ENCODE measurements at regions of chr1 and their contacts with region 1.

Region 1: GRCh38 chr1:18902523-18903290 is at the start of gene ALDH4A1:
- DNase-seq: peak; percentile 98
- H3K4me3 ChIP-seq: peak within 1 kb of the TSS; percentile 82 to 90 (median 83)
- H3K27ac ChIP-seq: peak within 1 kb of the TSS; percentile 88
- H3K4me1 ChIP-seq: peaks cover 22% of the 10 kb centered on the region
- H3K27me3 ChIP-seq: no peaks in the 10 kb centered on the region
- CTCF ChIP-seq: peak in 1 of 2 donors; percentile 0
- POLR2A ChIP-seq: peak; percentile 49
- total RNA-seq, gene ALDH4A1: 17.4 and 18.6 TPM in 2 replicates

Region 2: GRCh38 chr1:18918417-18918816 is 15.7 kb after region 1 on chr1:
- CTCF ChIA-PET with region 1: interaction called, 38 read pairs
- POLR2A ChIA-PET with region 1: no interaction called
- dilution Hi-C with region 1: no loop called
- intact Hi-C with region 1: no loop called
- DNase-seq: no peak
- H3K4me3 ChIP-seq: no peak overlapping the region
- H3K27ac ChIP-seq: no peak overlapping the region
- H3K4me1 ChIP-seq: peaks cover 21% of the 10 kb centered on the region
- H3K27me3 ChIP-seq: no peaks in the 10 kb centered on the region
- CTCF ChIP-seq: no peak
- POLR2A ChIP-seq: no peak

Region 3: GRCh38 chr1:18956369-18957135 is 53.8 kb after region 1 on chr1 and contains the start of gene IFFO2:
- CTCF ChIA-PET with region 1: interaction called, 50 read pairs
- POLR2A ChIA-PET with region 1: interaction called, 7 read pairs
- dilution Hi-C with region 1: no loop called
- intact Hi-C with region 1: loop called (anchors 1 kb)
- DNase-seq: peak; percentile 93
- H3K4me3 ChIP-seq: peak within 1 kb of the TSS; percentile 84 to 89 (median 86)
- H3K27ac ChIP-seq: peak within 1 kb of the TSS; percentile 82
- H3K4me1 ChIP-seq: peaks cover 25% of the 10 kb centered on the region
- H3K27me3 ChIP-seq: peaks cover 4 to 9% of the 10 kb centered on the region in 2 experiments
- CTCF ChIP-seq: no peak
- POLR2A ChIP-seq: peak; percentile 88
- total RNA-seq, gene IFFO2: 31.1 and 35.1 TPM in 2 replicates

Region 4: DNA sequence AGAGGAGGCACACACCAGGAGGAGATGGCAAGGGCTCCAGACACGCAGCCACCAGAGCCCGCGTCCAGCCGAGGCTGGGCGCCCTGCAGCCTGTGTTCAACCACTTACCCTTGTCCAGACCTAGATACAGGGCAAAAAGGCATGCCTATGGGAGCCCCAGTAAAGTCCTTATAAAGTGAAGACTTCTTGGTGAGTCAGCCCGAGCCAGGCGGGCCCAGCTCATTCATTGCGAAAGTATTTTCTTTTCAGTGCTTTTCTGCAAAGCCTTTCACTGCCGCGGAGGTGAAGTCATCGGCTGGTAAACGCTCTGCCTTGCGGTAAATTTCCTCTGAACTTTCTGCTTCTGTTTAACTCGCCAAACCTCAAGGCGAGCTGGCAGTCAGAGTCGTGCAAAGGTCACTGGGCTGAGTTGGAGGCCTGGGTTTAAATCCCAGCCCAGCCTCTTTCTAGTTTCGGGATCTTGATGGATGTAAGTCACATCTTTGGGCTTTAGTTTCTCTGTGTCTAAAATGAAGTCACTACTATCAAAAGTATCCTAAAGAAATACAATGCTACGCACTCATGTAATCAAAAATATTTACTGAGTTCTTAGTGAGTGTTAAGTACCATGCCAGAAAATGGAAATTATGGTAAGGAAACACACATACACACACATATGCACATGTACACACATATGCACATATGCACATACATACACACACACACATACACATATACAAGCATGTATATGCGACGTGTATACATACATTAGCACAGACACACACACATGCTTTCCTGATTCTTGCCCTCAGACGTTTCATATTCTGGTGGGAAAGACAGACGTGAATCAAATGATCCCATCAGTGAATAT is 108.5 kb after region 1 on chr1:
- CTCF ChIA-PET with region 1: interaction called, 14 read pairs
- POLR2A ChIA-PET with region 1: no interaction called
- dilution Hi-C with region 1: no loop called
- intact Hi-C with region 1: no loop called
- DNase-seq: peak; percentile 89
- H3K4me3 ChIP-seq: no peak overlapping the region
- H3K27ac ChIP-seq: peak overlapping the region; percentile 84
- H3K4me1 ChIP-seq: peaks cover 31% of the 10 kb centered on the region
- H3K27me3 ChIP-seq: no peaks in the 10 kb centered on the region
- CTCF ChIP-seq: no peak
- POLR2A ChIP-seq: no peak

Region 5: GRCh38 chr1:19087737-19088594 is 185.3 kb after region 1 on chr1:
- CTCF ChIA-PET with region 1: interaction called, 38 read pairs
- POLR2A ChIA-PET with region 1: interaction called, 4 read pairs
- dilution Hi-C with region 1: no loop called
- intact Hi-C with region 1: loop called (anchors 1 kb)
- DNase-seq: no peak
- H3K4me3 ChIP-seq: no peak overlapping the region
- H3K27ac ChIP-seq: no peak overlapping the region
- H3K4me1 ChIP-seq: peaks cover 15% of the 10 kb centered on the region
- H3K27me3 ChIP-seq: no peaks in the 10 kb centered on the region
- CTCF ChIP-seq: no peak
- POLR2A ChIP-seq: no peak

Region 6: DNA sequence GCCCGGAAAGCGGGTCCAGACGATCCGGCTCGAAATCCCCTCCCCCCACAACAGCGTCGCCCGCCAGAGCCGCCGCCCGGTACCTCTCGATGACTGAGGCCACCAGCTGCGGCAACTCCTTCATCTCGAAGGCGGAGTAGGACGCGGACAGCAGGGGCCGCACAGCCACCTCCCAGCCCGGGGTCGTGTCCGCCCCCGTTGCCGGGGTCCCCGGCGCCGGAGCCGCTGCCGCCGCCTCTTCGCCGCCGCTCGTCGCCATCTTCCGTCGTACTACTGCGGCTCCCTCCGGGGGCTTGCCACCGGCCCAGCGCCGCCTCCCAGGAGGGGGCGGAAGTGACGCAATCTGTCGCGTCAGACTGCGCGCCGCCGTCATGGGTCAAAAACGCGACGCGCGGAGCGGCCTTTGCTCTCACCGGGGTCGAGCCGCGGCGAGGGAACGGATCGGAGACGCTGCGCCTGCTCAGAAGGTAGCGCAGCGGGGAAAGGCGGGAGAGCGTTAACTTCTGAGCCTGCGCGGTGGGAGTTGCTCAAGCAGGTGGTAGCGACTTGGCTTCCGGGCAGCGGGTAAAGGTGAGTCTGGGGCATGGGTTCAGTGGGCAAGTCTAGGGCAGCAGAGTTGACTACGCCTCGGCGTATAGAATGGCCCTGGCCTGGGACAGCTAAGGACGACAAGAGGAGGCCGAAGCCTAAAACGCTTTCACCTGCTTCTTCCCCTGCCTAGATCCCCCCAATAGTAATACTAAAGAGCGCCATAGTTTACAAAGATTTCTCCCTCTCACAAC is 307.5 kb after region 1 on chr1 and contains the start of gene UBR4:
- CTCF ChIA-PET with region 1: no interaction called
- POLR2A ChIA-PET with region 1: no interaction called
- dilution Hi-C with region 1: no loop called
- intact Hi-C with region 1: loop called (anchors 10 kb)
- DNase-seq: peak; percentile 96
- H3K4me3 ChIP-seq: peak within 1 kb of the TSS; percentile 26 to 94 (median 81)
- H3K27ac ChIP-seq: peak within 1 kb of the TSS; percentile 80
- H3K4me1 ChIP-seq: peaks cover 22% of the 10 kb centered on the region
- H3K27me3 ChIP-seq: no peaks in the 10 kb centered on the region
- CTCF ChIP-seq: no peak
- POLR2A ChIP-seq: peak; percentile 52
- total RNA-seq, gene UBR4: 146 and 150 TPM in 2 replicates